ENCODE measurements at regions of chr18 and their contacts with region 1.

Region 1: GRCh38 chr18:2994603-2995432 is 18.1 kb downstream of the LPIN2 start:
- DNase-seq: peak in 34 of 35 experiments; percentile 48 to 85 (median 72)
- ATAC-seq: peak; percentile 82 to 86 (median 85)
- H3K4me3 ChIP-seq: peak overlapping the region in 1 of 2 donors; percentile 7
- H3K4me3 Mint-ChIP-seq: peak overlapping the region; percentile 41 to 43 (median 43)
- H3K27ac ChIP-seq: peak overlapping the region; percentile 60
- H3K27ac Mint-ChIP-seq: peak overlapping the region; percentile 75 to 89
- H3K4me1 ChIP-seq: peaks cover 31 to 40% of the 10 kb centered on the region in 2 experiments
- H3K4me1 Mint-ChIP-seq: peaks cover 74 to 90% (median 82%) of the 10 kb centered on the region in 3 donors
- H3K27me3 ChIP-seq: no peaks in the 10 kb centered on the region
- H3K27me3 Mint-ChIP-seq: no peaks in the 10 kb centered on the region

Region 2: GRCh38 chr18:2932247-2933181 is 62.3 kb before region 1 on chr18:
- CTCF ChIA-PET with region 1: interaction called, 6 to 32 read pairs
- POLR2A ChIA-PET with region 1: no interaction called
- DNase-seq: peak in 21 of 35 experiments; percentile 8 to 85 (median 37)
- ATAC-seq: peak; percentile 60 to 75 (median 66)
- H3K4me3 ChIP-seq: no peak overlapping the region
- H3K4me3 Mint-ChIP-seq: peak overlapping the region in 1 of 3 donors; percentile 35
- H3K27ac ChIP-seq: peak overlapping the region; percentile 52
- H3K27ac Mint-ChIP-seq: peak overlapping the region; percentile 88 to 89
- H3K4me1 ChIP-seq: peaks cover 0 to 6% of the 10 kb centered on the region in 2 experiments
- H3K4me1 Mint-ChIP-seq: peaks cover 29 to 36% (median 35%) of the 10 kb centered on the region in 3 donors
- H3K27me3 ChIP-seq: no peaks in the 10 kb centered on the region
- H3K27me3 Mint-ChIP-seq: no peaks in the 10 kb centered on the region

Region 3: GRCh38 chr18:2978646-2979045 is 16.2 kb before region 1 on chr18:
- CTCF ChIA-PET with region 1: interaction called, 5 to 12 read pairs
- POLR2A ChIA-PET with region 1: interaction called in 1 of 2 experiments, 4 read pairs
- DNase-seq: peak in 1 of 35 experiments; percentile 54
- ATAC-seq: peak; percentile 12 to 21 (median 14)
- H3K4me3 ChIP-seq: peak overlapping the region in 1 of 2 donors; percentile 32
- H3K4me3 Mint-ChIP-seq: peak overlapping the region; percentile 76 to 87 (median 79)
- H3K27ac ChIP-seq: peak overlapping the region; percentile 83
- H3K27ac Mint-ChIP-seq: peak overlapping the region; percentile 97 to 99
- H3K4me1 ChIP-seq: peaks cover 45 to 58% of the 10 kb centered on the region in 2 experiments
- H3K4me1 Mint-ChIP-seq: peaks cover 82 to 93% (median 86%) of the 10 kb centered on the region in 3 donors
- H3K27me3 ChIP-seq: no peaks in the 10 kb centered on the region
- H3K27me3 Mint-ChIP-seq: no peaks in the 10 kb centered on the region

Region 4: DNA sequence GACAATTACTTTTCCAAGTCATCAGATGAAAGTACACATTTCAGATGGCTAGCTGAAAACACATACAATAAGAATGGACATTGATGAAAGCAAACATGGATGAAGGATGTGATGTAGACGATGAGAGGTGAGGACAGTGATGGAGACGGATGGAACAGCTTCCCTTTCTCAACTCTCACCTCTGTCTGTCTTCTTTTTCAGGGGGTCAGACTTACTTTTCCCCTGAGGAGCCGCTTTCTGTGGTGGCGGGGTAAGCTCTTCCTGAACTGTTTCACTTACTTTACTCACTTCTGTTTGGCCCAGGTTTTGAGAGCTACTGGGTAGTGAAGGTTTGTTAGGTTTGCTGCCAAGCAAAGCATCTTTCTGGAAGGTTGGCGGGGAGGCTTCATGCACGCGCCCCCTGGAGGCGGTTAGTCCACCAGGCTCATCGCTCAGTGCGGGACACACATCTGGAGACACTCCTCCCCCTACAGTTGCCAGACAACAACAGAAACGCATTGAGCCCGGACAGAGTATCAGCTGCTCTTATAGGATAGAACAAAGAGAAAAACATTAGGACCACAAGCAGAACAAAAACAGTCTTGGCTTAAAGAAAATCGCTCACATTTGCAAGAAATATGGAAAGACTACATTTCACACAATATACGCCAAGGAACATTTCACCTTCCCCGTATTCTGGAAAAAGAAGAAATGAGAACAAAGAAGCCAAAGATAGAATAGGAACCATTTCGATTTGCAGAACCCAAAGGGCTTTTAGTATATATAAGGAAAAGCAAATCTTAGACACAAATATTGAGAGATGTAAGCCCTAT is 134.4 kb after region 1 on chr18:
- CTCF ChIA-PET with region 1: interaction called, 86 to 93 read pairs
- POLR2A ChIA-PET with region 1: no interaction called
- DNase-seq: peak; percentile 59 to 88 (median 77)
- ATAC-seq: peak; percentile 95 to 99 (median 98)
- H3K4me3 ChIP-seq: no peak overlapping the region
- H3K4me3 Mint-ChIP-seq: no peak overlapping the region
- H3K27ac ChIP-seq: no peak overlapping the region
- H3K27ac Mint-ChIP-seq: no peak overlapping the region
- H3K4me1 ChIP-seq: peaks cover 0 to 5% of the 10 kb centered on the region in 2 experiments
- H3K4me1 Mint-ChIP-seq: peaks cover 5 to 9% (median 8%) of the 10 kb centered on the region in 3 donors
- H3K27me3 ChIP-seq: no peaks in the 10 kb centered on the region
- H3K27me3 Mint-ChIP-seq: no peaks in the 10 kb centered on the region

Region 5: DNA sequence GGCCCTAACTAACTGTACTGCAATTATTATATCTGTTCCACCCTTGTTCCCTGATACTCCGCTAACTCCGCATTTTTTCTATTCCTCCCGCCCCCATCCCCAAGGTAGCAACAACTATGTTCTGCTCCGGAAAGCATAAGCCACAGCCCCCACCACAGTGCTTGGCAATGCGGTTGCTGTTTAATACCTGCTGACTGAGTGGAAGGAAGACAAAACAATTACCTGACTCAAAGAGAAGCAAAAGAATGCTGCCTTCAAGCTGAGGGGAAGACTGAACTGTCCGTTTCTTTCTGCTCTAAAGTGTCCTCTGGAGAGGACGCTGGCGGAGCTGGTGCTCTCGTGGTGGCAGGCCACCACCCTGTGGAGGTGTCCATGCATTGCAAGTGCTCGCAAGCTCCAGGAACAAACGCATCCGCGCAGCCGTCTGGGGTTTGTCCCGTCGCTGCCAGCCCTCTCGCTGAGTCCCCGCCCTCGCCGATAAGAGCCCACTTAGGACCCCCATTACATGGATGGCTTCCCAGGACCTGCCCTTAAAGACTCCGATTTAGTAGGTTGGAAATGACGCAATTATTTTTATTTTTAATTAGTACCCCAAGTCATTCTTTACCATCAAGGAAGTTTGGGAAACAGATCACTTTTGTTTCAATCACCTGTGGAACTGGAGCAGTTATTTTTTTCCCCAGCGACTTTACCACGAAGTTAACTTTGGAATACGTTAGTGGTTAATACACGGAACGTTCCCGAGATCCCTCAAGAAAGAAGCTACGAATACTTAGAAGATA is 251.2 kb after region 1 on chr18:
- CTCF ChIA-PET with region 1: interaction called, 6 to 25 read pairs
- POLR2A ChIA-PET with region 1: interaction called in 1 of 2 experiments, 5 read pairs
- DNase-seq: peak; percentile 49 to 85 (median 69)
- ATAC-seq: peak; percentile 43 to 59 (median 52)
- H3K4me3 ChIP-seq: peak overlapping the region; percentile 90
- H3K4me3 Mint-ChIP-seq: peak overlapping the region; percentile 96 to 98 (median 97)
- H3K27ac ChIP-seq: peak overlapping the region; percentile 82
- H3K27ac Mint-ChIP-seq: peak overlapping the region; percentile 89 to 93
- H3K4me1 ChIP-seq: peaks cover 27 to 32% of the 10 kb centered on the region in 2 experiments
- H3K4me1 Mint-ChIP-seq: peaks cover 38 to 45% (median 40%) of the 10 kb centered on the region in 3 donors
- H3K27me3 ChIP-seq: no peaks in the 10 kb centered on the region
- H3K27me3 Mint-ChIP-seq: no peaks in the 10 kb centered on the region

Region 6: DNA sequence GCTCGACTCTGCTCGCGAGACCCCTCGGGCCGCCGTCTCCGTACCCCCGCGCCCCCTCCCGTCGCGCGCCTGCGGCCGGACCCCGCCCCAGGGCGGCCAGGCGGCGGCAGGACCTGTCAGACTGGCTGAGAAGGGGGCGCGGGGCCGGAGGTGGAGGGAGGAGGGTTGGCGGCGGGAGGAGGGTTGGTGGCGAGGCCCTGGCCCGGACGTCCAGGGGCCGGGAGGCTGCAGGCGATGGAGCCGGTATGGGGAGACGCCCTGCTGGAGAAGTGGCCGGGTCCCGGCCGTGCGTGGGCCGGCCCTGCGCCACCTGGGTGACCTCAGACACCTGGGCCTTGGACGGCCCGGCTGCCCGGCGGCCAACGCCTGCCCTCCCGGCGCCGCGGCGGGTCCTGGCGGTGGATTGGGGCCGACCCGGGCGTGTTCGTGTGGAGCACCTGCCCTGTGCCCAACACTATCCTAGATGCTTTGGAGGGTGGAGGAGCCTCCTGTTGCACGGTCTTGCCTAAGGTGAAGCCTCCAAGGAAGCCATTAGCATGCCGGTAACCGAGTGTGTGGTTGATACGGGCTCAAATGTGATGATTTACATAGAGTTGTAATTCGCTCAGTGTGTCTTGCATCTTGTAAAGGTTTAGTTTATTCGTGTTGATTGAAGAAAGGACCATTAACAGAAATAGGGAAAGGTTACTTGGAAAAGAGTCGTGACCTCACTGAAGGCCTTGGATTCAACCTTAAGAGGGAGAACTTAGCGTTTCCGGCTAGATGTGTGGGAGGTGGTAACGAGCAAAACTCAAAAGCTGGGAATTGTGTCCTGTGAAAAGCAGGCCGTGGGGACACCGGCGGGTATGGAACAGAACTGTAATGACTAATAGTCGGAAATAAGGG is 267.7 kb after region 1 on chr18:
- CTCF ChIA-PET with region 1: no interaction called
- POLR2A ChIA-PET with region 1: no interaction called
- DNase-seq: peak in 24 of 35 experiments; percentile 10 to 64 (median 24)
- ATAC-seq: peak; percentile 15 to 41 (median 26)
- H3K4me3 ChIP-seq: peak overlapping the region; percentile 81 to 95
- H3K4me3 Mint-ChIP-seq: peak overlapping the region; percentile 97 to 100 (median 99)
- H3K27ac ChIP-seq: peak overlapping the region; percentile 95
- H3K27ac Mint-ChIP-seq: peak overlapping the region; percentile 93 to 100
- H3K4me1 ChIP-seq: peaks cover 36 to 50% of the 10 kb centered on the region in 2 experiments
- H3K4me1 Mint-ChIP-seq: peaks cover 82 to 89% (median 86%) of the 10 kb centered on the region in 3 donors
- H3K27me3 ChIP-seq: no peaks in the 10 kb centered on the region
- H3K27me3 Mint-ChIP-seq: no peaks in the 10 kb centered on the region

Measured in T-cell (primary cell).